Heart left ventricle (tissue), 16 donors: ENCODE measurements at regions of chr18 and their contacts with region 1.

Region 1: DNA sequence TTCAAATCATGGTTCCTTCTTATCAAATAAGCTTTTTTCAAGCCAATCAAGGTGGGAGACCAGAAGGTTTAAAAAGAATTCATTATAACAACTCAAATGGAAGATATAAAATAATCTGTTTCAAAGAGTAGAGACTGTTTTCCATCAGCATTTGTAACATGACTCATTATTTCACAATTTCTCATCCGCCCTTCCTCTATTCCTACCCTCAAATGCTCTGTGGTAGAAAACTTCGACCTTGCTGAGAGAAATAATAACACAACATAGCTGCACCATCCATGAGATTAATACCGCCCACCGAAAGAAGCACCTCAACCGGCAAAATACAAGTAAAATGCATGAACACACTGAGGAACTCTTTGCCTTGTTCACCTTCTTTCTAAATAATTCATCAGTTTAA is 2039.2 kb upstream of the CELF4 start:
- DNase-seq: no peak
- ATAC-seq: no peak
- H3K4me3 ChIP-seq: no peak overlapping the region
- H3K27ac ChIP-seq: no peak overlapping the region
- H3K4me1 ChIP-seq: no peaks in the 10 kb centered on the region
- H3K27me3 ChIP-seq: no peaks in the 10 kb centered on the region
- CTCF ChIP-seq: no peak
- POLR2A ChIP-seq: no peak

Region 2: GRCh38 chr18:39486268-39486667 is 118.6 kb before region 1 on chr18:
- intact Hi-C with region 1: no loop called
- DNase-seq: no peak
- ATAC-seq: no peak
- H3K4me3 ChIP-seq: no peak overlapping the region
- H3K27ac ChIP-seq: no peak overlapping the region
- H3K4me1 ChIP-seq: no peaks in the 10 kb centered on the region
- H3K27me3 ChIP-seq: no peaks in the 10 kb centered on the region
- CTCF ChIP-seq: no peak
- POLR2A ChIP-seq: no peak

Region 3: DNA sequence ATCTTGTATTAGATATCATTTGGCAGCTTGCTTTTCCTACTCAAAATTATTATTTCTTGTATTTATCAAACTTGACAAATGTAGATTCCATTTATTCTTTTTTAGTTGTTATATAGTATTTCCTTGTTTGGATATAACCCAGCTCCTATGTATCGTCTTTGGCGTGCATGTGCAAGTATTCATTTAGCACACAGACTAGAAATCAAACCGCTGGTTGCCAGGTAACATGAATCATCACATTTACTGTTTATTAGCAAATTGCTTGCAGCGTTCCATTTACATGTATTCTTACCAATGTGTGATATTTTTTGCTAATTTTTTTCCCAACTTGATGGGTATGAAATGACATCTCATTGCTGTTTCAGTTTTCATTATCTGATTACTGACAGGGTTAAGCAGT is 50.5 kb after region 1 on chr18:
- intact Hi-C with region 1: loop called in 1 of 10 experiments (anchors 5 kb)
- DNase-seq: no peak
- ATAC-seq: no peak
- H3K4me3 ChIP-seq: no peak overlapping the region
- H3K27ac ChIP-seq: no peak overlapping the region
- H3K4me1 ChIP-seq: no peaks in the 10 kb centered on the region
- H3K27me3 ChIP-seq: no peaks in the 10 kb centered on the region
- CTCF ChIP-seq: no peak
- POLR2A ChIP-seq: no peak

Region 4: GRCh38 chr18:39741755-39742466 is 137.1 kb after region 1 on chr18:
- intact Hi-C with region 1: no loop called
- DNase-seq: no peak
- ATAC-seq: no peak
- H3K4me3 ChIP-seq: no peak overlapping the region
- H3K27ac ChIP-seq: no peak overlapping the region
- H3K4me1 ChIP-seq: no peaks in the 10 kb centered on the region
- H3K27me3 ChIP-seq: no peaks in the 10 kb centered on the region
- CTCF ChIP-seq: no peak
- POLR2A ChIP-seq: no peak